Esophagus muscularis mucosa (tissue), 4 donors: ENCODE measurements at regions of chr4 and their contacts with region 1.

Region 1: GRCh38 chr4:151990201-151990600 is 229.4 kb upstream of the GATB start:
- DNase-seq: no peak
- H3K4me3 ChIP-seq: no peak overlapping the region
- H3K27ac ChIP-seq: peak overlapping the region; percentile 64 to 79 (median 74)
- H3K4me1 ChIP-seq: peaks cover 16 to 29% (median 24%) of the 10 kb centered on the region in 4 donors
- H3K27me3 ChIP-seq: no peaks in the 10 kb centered on the region
- CTCF ChIP-seq: no peak
- EP300 ChIP-seq: no peak
- POLR2A ChIP-seq: no peak

Region 2: DNA sequence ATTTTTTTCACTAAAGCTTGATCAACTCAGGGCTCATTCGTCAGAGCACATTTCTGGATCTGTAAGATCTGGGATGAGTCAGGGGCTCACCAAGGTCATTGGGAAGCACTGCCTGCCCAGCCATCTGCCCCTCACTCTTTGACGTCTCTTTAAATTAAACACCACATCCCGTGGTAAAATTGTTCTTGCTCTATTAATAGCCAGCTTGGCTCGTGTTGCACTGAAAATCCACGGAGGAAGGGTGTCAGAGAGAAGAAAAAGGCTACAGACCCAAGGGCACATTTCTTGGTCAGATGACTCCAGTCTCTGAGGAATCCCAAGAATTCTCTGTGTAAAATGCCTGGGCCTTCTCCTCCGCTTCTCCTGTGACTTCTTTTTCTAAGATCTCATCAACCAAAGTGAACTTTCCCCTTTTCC is 183.7 kb before region 1 on chr4:
- intact Hi-C with region 1: loop called (anchors 5 kb)
- DNase-seq: no peak
- H3K4me3 ChIP-seq: no peak overlapping the region
- H3K27ac ChIP-seq: peak overlapping the region; percentile 9 to 72 (median 36)
- H3K4me1 ChIP-seq: peaks cover 13 to 19% (median 17%) of the 10 kb centered on the region in 4 donors
- H3K27me3 ChIP-seq: no peaks in the 10 kb centered on the region
- CTCF ChIP-seq: no peak
- EP300 ChIP-seq: no peak
- POLR2A ChIP-seq: no peak

Region 3: GRCh38 chr4:151865312-151865711 is 124.9 kb before region 1 on chr4:
- intact Hi-C with region 1: no loop called
- DNase-seq: no peak
- H3K4me3 ChIP-seq: no peak overlapping the region
- H3K27ac ChIP-seq: no peak overlapping the region
- H3K4me1 ChIP-seq: peaks cover 0 to 15% (median 10%) of the 10 kb centered on the region in 4 donors
- H3K27me3 ChIP-seq: no peaks in the 10 kb centered on the region
- CTCF ChIP-seq: no peak
- EP300 ChIP-seq: no peak
- POLR2A ChIP-seq: no peak